GM12878 (cell line): ENCODE measurements at regions of chr19 and their contacts with region 1.

Region 1: GRCh38 chr19:42254989-42255765 is at the start of gene ERF:
- DNase-seq: peak; percentile 45
- ATAC-seq: peak; percentile 79
- H3K4me3 ChIP-seq: peak within 1 kb of the TSS; percentile 99
- H3K27ac ChIP-seq: peak within 1 kb of the TSS; percentile 94
- H3K4me1 ChIP-seq: peaks cover 16% of the 10 kb centered on the region
- H3K27me3 ChIP-seq: no peaks in the 10 kb centered on the region
- CTCF ChIP-seq: no peak
- EP300 ChIP-seq: no peak
- POLR2A ChIP-seq: peak; percentile 89
- RAD21 ChIP-seq: no peak
- polyA plus RNA-seq, gene ERF: 0.02 to 0.04 TPM

Region 2: DNA sequence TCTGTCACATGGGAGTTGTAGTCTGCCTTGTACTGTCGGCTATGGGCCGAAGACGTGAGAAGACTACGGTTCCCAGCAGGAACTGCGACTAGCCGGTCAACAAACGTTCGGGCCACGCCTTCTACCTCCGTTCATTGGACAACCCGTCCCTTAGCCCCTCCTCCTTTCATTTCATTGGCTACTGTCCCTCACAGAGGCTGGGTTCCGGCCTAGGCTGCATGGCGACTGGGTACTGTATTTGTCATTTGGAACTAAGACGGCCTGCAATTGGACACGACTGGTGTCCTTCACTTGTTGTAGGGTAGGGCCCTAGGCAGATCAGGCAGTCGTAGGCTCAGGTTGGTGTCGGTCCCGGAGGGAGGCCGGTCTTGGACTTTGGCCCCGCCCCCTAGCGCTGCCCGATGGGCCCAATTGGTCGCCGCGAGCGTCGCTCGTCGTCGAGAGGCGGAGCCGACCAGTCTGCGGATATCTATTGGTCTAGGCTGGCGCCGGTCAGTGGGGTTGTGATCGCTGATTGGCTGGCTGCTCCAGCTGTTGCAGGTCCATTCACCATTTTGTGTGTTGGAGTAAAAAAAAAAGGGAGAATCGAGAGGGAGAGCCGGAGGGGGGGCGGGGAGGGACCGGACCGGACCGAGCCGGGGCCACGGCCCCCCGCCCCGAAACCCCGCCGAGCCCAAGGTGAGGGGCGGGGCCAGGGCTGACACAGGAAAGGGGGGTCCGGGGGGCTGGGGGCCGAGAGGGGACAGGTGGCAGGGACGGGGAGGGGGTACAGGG is 13.7 kb after region 1 on chr19 and contains the start of gene CIC:
- CTCF ChIA-PET with region 1: interaction called, 3 read pairs
- POLR2A ChIA-PET with region 1: interaction called, 5 read pairs
- RAD21 ChIA-PET with region 1: no interaction called
- SMC1A ChIA-PET with region 1: interaction called, 5 read pairs
- in situ Hi-C with region 1: no loop called
- intact Hi-C with region 1: loop called (anchors 1 kb)
- DNase-seq: peak; percentile 100
- ATAC-seq: peak; percentile 90
- H3K4me3 ChIP-seq: peak within 1 kb of the TSS; percentile 91
- H3K27ac ChIP-seq: peak within 1 kb of the TSS; percentile 100
- H3K4me1 ChIP-seq: peaks cover 15% of the 10 kb centered on the region
- H3K27me3 ChIP-seq: no peaks in the 10 kb centered on the region
- CTCF ChIP-seq: no peak
- EP300 ChIP-seq: no peak
- POLR2A ChIP-seq: peak; percentile 50; the same call in 1 of the 2 replicates
- RAD21 ChIP-seq: no peak
- polyA plus RNA-seq, gene CIC: 0.18 to 0.24 TPM

Region 3: DNA sequence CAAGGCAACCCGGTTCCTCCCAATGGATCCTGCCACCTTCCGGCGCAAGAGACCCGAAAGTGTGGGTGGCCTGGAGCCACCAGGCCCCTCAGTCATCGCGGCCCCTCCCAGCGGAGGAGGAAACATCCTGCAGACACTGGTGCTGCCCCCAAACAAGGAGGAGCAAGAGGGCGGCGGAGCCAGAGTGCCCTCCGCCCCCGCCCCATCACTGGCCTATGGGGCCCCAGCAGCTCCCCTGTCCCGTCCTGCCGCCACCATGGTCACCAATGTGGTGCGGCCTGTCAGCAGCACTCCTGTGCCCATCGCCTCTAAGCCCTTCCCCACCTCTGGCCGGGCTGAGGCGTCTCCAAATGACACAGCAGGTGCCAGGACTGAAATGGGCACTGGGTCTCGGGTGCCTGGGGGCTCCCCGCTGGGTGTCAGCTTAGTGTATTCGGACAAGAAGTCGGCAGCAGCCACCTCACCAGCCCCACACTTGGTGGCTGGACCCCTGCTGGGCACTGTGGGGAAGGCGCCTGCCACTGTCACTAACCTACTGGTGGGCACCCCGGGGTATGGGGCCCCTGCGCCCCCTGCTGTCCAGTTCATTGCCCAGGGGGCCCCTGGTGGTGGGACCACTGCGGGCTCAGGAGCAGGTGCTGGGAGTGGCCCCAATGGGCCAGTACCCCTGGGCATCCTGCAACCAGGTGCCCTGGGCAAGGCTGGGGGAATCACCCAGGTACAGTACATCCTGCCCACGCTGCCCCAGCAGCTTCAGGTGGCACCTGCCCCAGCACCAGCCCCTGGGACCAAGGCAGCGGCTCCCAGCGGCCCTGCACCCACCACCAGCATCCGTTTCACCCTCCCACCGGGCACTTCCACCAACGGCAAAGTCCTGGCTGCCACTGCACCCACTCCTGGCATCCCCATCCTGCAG is 35.6 kb after region 1 on chr19:
- CTCF ChIA-PET with region 1: no interaction called
- POLR2A ChIA-PET with region 1: no interaction called
- RAD21 ChIA-PET with region 1: no interaction called
- SMC1A ChIA-PET with region 1: no interaction called
- in situ Hi-C with region 1: no loop called
- intact Hi-C with region 1: no loop called
- DNase-seq: no peak
- ATAC-seq: peak; percentile 90
- H3K4me3 ChIP-seq: no peak overlapping the region
- H3K27ac ChIP-seq: no peak overlapping the region
- H3K4me1 ChIP-seq: peaks cover 6% of the 10 kb centered on the region
- H3K27me3 ChIP-seq: no peaks in the 10 kb centered on the region
- CTCF ChIP-seq: peak; percentile 49 to 73 (median 63)
- EP300 ChIP-seq: no peak
- POLR2A ChIP-seq: 0 out of 2 replicates have a peak, but pooled peaks have one; percentile 42
- RAD21 ChIP-seq: peak; percentile 35

Region 4: GRCh38 chr19:42343344-42344110 is 88.3 kb after region 1 on chr19:
- CTCF ChIA-PET with region 1: no interaction called
- POLR2A ChIA-PET with region 1: no interaction called
- RAD21 ChIA-PET with region 1: no interaction called
- SMC1A ChIA-PET with region 1: no interaction called
- in situ Hi-C with region 1: no loop called
- intact Hi-C with region 1: no loop called
- DNase-seq: no peak
- ATAC-seq: no peak
- H3K4me3 ChIP-seq: no peak overlapping the region
- H3K27ac ChIP-seq: no peak overlapping the region
- H3K4me1 ChIP-seq: no peaks in the 10 kb centered on the region
- H3K27me3 ChIP-seq: no peaks in the 10 kb centered on the region
- CTCF ChIP-seq: peak in 2 of 3 experiments; percentile 22 to 29; a peak in 1 of 6 replicates
- EP300 ChIP-seq: no peak
- POLR2A ChIP-seq: no peak
- RAD21 ChIP-seq: no peak